IMR-90 (cell line): ENCODE measurements at regions of chr16 and their contacts with region 1.

Region 1: DNA sequence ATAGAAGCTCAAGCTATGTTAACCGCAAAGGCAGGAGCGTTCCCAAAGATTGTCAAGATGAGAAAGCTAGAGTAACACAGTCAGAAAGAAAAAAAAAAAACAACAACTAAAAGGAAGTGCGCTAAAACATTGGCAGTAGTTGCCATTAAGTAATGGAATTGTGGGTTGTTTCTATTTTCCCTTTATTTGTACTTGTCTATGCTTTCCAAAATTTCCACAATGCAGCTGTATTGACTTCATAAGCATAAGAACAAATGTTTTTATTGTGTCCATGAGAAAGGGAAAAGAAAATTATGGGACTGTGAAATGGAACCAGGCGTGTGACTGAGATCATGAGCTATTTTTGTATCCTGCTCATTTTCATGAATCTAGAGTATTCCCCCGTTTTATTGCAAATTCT is 153.4 kb downstream of the TMEM114 start:
- DNase-seq: no peak
- ATAC-seq: no peak
- H3K4me3 ChIP-seq: no peak overlapping the region
- H3K27ac ChIP-seq: no peak overlapping the region
- H3K4me1 ChIP-seq: no peaks in the 10 kb centered on the region
- H3K27me3 ChIP-seq: no peaks in the 10 kb centered on the region
- CTCF ChIP-seq: no peak
- POLR2A ChIP-seq: no peak
- RAD21 ChIP-seq: no peak

Region 2: DNA sequence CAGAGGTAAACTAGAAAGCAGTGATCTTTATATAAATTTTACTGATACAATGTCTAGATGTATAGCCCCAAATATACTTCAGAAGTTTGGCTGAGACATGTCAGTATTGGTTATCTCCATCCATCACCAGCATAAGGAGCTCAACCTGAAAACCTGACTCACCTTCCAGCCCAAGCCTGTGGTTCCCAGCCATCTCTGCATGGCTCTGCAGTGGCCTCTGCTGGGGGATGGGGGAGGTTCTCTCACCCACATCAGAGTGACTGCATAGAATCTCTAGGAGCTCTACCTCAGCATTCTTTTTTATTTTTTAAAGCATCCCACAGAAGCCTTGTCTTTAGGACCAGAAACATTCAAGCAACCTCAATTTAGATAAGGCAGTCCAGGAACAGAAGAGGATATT is 499.5 kb after region 1 on chr16:
- CTCF ChIA-PET with region 1: no interaction called
- POLR2A ChIA-PET with region 1: no interaction called
- dilution Hi-C with region 1: no loop called
- in situ Hi-C with region 1: no loop called
- intact Hi-C with region 1: loop called (anchors 10 kb)
- DNase-seq: peak; percentile 54
- ATAC-seq: peak; percentile 86
- H3K4me3 ChIP-seq: no peak overlapping the region
- H3K27ac ChIP-seq: no peak overlapping the region
- H3K4me1 ChIP-seq: no peaks in the 10 kb centered on the region
- H3K27me3 ChIP-seq: no peaks in the 10 kb centered on the region
- CTCF ChIP-seq: peak; percentile 46
- POLR2A ChIP-seq: no peak
- RAD21 ChIP-seq: peak; percentile 44